GM12878 (cell line): ENCODE measurements at regions of chr10 and their contacts with region 1.

Region 1: DNA sequence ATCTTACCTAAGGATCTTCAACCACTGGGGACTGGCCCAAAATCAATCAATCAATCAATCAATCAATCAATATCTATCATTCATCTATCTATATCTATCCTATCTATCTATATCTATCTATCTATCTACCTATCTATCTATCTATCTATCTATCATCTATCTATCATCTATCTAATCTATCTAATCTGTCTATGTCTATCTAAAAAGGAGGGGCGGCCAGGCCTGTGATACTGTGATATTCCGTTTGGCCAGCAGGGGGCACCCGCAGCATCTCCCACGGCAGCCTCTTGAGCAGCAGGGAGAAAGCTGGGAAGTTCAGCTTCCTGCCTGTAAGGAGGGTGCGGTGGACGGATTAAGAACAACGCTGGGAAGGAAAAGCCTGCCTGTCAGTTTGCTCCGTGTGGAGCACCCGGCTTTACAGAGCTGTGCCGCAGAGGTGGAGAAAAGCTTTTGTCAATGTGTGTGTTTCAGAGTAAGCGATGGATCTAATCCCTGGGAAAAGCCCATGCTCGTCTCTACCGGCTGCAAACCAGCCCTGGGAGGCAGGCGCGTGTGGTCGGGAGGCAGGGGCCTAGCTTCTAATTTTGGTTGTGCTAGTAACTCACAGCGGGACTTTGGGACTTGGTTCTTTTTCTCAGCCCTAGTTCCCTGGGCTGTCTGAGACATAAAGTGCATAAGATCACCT is 125.0 kb downstream of the SH2D4B start:
- DNase-seq: peak; percentile 15
- ATAC-seq: peak; percentile 86
- H3K4me3 ChIP-seq: peak overlapping the region; percentile 6; the same call in 1 of the 2 replicates
- H3K27ac ChIP-seq: no peak overlapping the region
- H3K4me1 ChIP-seq: no peaks in the 10 kb centered on the region
- H3K27me3 ChIP-seq: no peaks in the 10 kb centered on the region
- CTCF ChIP-seq: peak; percentile 72 to 83 (median 82)
- EP300 ChIP-seq: no peak
- POLR2A ChIP-seq: no peak
- RAD21 ChIP-seq: peak; percentile 64

Region 2: GRCh38 chr10:80382989-80383388 is 279.7 kb before region 1 on chr10:
- CTCF ChIA-PET with region 1: interaction called, 6 read pairs
- POLR2A ChIA-PET with region 1: no interaction called
- RAD21 ChIA-PET with region 1: interaction called, 3 read pairs
- SMC1A ChIA-PET with region 1: no interaction called
- in situ Hi-C with region 1: no loop called
- intact Hi-C with region 1: loop called (anchors 10 kb)
- DNase-seq: peak; percentile 19
- ATAC-seq: peak; percentile 65
- H3K4me3 ChIP-seq: no peak overlapping the region
- H3K27ac ChIP-seq: no peak overlapping the region
- H3K4me1 ChIP-seq: no peaks in the 10 kb centered on the region
- H3K27me3 ChIP-seq: peaks cover 0 to 3% of the 10 kb centered on the region in 2 experiments; a peak in 1 of 4 replicates
- CTCF ChIP-seq: peak; percentile 52 to 68 (median 66)
- EP300 ChIP-seq: no peak
- POLR2A ChIP-seq: no peak
- RAD21 ChIP-seq: peak; percentile 72

Region 3: GRCh38 chr10:80535671-80536365 is 126.9 kb before region 1 on chr10:
- CTCF ChIA-PET with region 1: interaction called, 22 read pairs
- POLR2A ChIA-PET with region 1: no interaction called
- RAD21 ChIA-PET with region 1: no interaction called
- SMC1A ChIA-PET with region 1: no interaction called
- in situ Hi-C with region 1: no loop called
- intact Hi-C with region 1: loop called (anchors 2 kb)
- DNase-seq: no peak
- ATAC-seq: peak; percentile 89
- H3K4me3 ChIP-seq: peak overlapping the region; percentile 83
- H3K27ac ChIP-seq: peak overlapping the region; percentile 91
- H3K4me1 ChIP-seq: peaks cover 14% of the 10 kb centered on the region
- H3K27me3 ChIP-seq: no peaks in the 10 kb centered on the region
- CTCF ChIP-seq: peak; percentile 77 to 82 (median 81)
- EP300 ChIP-seq: peak in 1 of 2 experiments; percentile 7; a peak in 1 of 4 replicates
- POLR2A ChIP-seq: peak; percentile 93
- RAD21 ChIP-seq: peak; percentile 81

Region 4: DNA sequence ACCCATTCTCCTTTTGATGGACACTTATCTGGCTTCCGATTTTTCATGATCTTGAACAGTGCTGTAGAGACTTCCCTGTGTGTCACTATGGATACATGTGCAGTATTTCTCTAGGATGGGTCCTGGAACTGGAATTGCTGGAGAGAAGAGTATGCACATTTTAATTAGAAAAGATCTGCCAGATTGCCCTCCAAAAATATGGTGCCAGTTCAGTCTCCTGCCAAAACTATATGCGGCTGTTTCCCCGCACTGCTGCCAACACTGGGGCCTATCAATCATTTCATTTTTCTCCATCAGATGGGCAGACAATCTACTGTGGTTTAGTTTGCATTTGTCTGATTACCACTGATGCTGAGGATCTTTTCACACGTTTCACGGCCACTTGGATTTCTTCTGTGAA is 20.1 kb before region 1 on chr10:
- CTCF ChIA-PET with region 1: interaction called, 21 read pairs
- POLR2A ChIA-PET with region 1: no interaction called
- RAD21 ChIA-PET with region 1: no interaction called
- SMC1A ChIA-PET with region 1: no interaction called
- in situ Hi-C with region 1: no loop called
- intact Hi-C with region 1: no loop called
- DNase-seq: no peak
- ATAC-seq: no peak
- H3K4me3 ChIP-seq: no peak overlapping the region
- H3K27ac ChIP-seq: no peak overlapping the region
- H3K4me1 ChIP-seq: no peaks in the 10 kb centered on the region
- H3K27me3 ChIP-seq: no peaks in the 10 kb centered on the region
- CTCF ChIP-seq: no peak
- EP300 ChIP-seq: no peak
- POLR2A ChIP-seq: no peak
- RAD21 ChIP-seq: no peak

Region 5: GRCh38 chr10:80681142-80681541 is 18.4 kb after region 1 on chr10:
- CTCF ChIA-PET with region 1: interaction called, 14 read pairs
- POLR2A ChIA-PET with region 1: no interaction called
- RAD21 ChIA-PET with region 1: no interaction called
- SMC1A ChIA-PET with region 1: interaction called, 7 read pairs
- in situ Hi-C with region 1: no loop called
- intact Hi-C with region 1: no loop called
- DNase-seq: no peak
- ATAC-seq: no peak
- H3K4me3 ChIP-seq: no peak overlapping the region
- H3K27ac ChIP-seq: no peak overlapping the region
- H3K4me1 ChIP-seq: no peaks in the 10 kb centered on the region
- H3K27me3 ChIP-seq: no peaks in the 10 kb centered on the region
- CTCF ChIP-seq: no peak
- EP300 ChIP-seq: no peak
- POLR2A ChIP-seq: no peak
- RAD21 ChIP-seq: no peak

Region 6: GRCh38 chr10:80699602-80700039 is 36.9 kb after region 1 on chr10:
- CTCF ChIA-PET with region 1: interaction called, 25 read pairs
- POLR2A ChIA-PET with region 1: no interaction called
- RAD21 ChIA-PET with region 1: interaction called, 3 read pairs
- SMC1A ChIA-PET with region 1: interaction called, 5 read pairs
- in situ Hi-C with region 1: no loop called
- intact Hi-C with region 1: no loop called
- DNase-seq: no peak
- ATAC-seq: peak; percentile 96
- H3K4me3 ChIP-seq: no peak overlapping the region
- H3K27ac ChIP-seq: no peak overlapping the region
- H3K4me1 ChIP-seq: no peaks in the 10 kb centered on the region; the same call in 1 of the 2 replicates
- H3K27me3 ChIP-seq: no peaks in the 10 kb centered on the region
- CTCF ChIP-seq: peak; percentile 88 to 92 (median 90)
- EP300 ChIP-seq: no peak
- POLR2A ChIP-seq: no peak
- RAD21 ChIP-seq: peak; percentile 88

Region 7: GRCh38 chr10:81018708-81019365 is 356.1 kb after region 1 on chr10:
- CTCF ChIA-PET with region 1: interaction called, 8 read pairs
- POLR2A ChIA-PET with region 1: no interaction called
- RAD21 ChIA-PET with region 1: interaction called, 3 read pairs
- SMC1A ChIA-PET with region 1: interaction called, 4 read pairs
- in situ Hi-C with region 1: no loop called
- intact Hi-C with region 1: loop called (anchors 1 kb)
- DNase-seq: no peak
- ATAC-seq: peak; percentile 88
- H3K4me3 ChIP-seq: no peak overlapping the region
- H3K27ac ChIP-seq: no peak overlapping the region
- H3K4me1 ChIP-seq: no peaks in the 10 kb centered on the region; the same call in 1 of the 2 replicates
- H3K27me3 ChIP-seq: no peaks in the 10 kb centered on the region
- CTCF ChIP-seq: peak; percentile 72 to 80 (median 73)
- EP300 ChIP-seq: no peak
- POLR2A ChIP-seq: no peak
- RAD21 ChIP-seq: peak; percentile 78